ENCODE measurements at regions of chr5 and their contacts with region 1.

Region 1: DNA sequence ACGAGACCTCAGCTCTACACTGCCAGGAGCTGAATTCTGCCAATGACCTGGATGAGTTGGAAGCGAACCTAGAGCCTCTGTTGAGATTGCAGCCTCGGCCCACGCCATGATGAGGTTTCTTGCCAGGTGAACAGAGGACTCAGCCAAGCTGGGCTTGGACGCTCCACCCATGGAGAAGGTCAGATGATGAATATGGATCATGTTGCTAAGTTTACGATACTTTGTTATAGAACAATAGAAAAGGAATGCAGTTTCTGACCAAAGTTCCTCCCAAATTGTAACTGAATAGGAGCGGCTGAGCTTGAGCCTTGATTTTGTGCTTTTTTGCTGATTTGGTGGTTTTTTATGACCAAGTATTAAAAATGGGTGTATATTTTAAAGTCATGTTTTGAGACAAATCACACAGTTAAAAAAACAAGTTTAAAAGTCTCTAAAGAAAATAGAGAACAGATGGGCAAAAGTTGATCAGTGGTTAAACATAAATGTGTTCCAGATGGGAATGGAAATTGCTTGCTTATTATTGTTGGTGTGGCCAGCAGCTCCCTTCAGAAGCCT is 32.9 kb downstream of the ROPN1L start:
- DNase-seq: peak; percentile 89
- H3K4me3 ChIP-seq: no peak overlapping the region
- CTCF ChIP-seq: no peak

Region 2: DNA sequence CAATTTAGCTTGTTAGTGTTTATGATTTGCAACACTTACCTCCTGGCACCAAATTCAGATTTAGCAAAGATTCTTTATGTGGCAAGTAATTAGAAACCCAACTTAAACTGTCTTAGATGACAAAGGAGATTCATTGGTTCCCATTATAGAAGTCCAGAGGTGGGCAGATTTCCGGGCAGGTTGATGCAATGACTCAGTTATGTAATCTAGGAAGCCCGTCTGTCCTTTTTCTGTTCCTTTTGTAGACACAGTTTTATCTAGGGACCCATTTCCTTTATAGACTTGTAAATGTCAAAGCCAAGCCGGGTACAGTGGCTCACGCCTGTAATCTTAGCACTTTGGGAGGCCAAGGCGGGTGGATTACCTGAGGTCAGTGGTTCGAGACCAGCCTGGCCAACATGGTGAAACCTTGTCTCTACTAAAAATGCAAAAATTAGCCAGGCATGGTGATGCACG is 69.0 kb after region 1 on chr5:
- in situ Hi-C with region 1: loop called (anchors 5 kb)
- DNase-seq: no peak
- H3K4me3 ChIP-seq: no peak overlapping the region
- CTCF ChIP-seq: no peak

Region 3: DNA sequence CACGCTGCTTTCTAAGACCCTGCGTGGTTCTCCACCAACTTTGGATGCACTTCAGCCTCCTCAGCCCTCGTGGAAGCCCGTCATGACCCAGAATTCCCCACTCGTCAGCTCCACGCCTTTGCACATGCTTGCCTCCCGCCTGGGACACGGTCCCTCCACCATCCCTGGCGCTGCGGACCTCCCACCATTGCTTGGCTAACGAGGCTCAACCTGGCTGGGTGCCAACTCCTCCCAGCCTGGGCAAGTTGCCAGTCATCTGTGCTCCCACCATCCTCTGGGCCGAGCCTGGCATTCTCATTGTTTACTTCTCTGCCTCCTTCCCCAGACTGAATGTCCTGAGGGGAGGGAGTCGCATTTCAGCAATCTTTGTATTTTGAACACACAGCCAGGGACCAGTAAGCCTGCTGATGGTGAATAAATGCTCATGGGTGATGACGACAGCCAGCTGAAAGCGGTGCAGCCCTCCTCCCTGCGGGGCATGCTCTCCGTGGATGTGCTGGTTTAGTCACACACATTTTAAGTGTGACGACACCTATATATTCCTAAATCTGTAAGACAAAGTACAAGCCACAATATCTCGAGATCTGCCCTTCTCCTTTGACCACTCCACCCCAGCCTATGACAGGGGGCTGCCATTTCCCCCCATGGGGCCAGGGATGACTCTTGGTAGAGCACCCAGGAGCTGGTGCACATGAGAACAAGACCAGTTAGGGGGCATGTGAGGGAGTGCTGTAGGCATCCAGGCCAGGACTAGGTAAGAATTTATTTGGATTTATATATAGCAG is 126.8 kb after region 1 on chr5:
- in situ Hi-C with region 1: no loop called
- DNase-seq: peak; percentile 73
- H3K4me3 ChIP-seq: no peak overlapping the region
- CTCF ChIP-seq: no peak

Measured in astrocyte of the cerebellum (primary cell).